Prostate gland (tissue), 2 donors: ENCODE measurements at regions of chr6 and their contacts with region 1.

Region 1: DNA sequence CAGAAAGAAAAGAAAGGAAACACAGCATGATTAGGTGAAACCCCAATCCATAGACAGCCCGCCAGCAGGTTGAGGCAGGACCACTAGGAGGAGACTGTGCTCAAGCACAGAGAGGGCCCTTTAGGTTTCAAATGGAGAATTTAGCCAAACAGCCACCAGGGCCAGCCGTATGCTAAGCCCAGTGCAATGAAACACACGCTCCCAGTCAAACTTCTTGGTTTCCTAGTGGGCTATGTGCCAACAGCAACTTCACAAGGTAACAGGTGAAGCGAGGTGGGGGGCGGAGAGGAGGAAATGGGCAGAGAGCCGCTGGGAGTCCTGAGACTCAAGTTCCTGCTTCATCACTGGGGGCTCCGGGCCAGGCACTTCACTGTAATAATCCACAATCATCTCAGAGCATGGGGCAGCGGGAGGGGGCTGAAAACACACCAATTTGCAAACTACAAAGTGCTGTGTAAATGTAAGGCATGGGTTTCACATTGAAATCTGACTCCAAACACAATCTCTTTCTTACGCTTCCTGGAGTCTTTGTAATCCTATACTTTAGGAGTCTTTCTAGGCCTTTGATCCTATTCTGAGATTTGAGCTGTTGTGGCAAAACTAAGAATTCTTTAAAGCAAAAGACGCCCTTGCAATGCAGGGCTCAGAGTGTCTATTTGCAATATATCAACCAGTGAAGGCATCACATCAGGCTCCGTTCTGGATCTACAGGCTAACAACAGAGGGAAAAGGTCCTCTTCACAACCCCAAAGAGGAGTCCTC is 117.3 kb downstream of the OPRM1 start:
- DNase-seq: peak; percentile 23
- H3K4me3 ChIP-seq: no peak overlapping the region
- H3K27ac ChIP-seq: no peak overlapping the region
- H3K4me1 ChIP-seq: no peaks in the 10 kb centered on the region
- H3K27me3 ChIP-seq: no peaks in the 10 kb centered on the region
- CTCF ChIP-seq: peak in 2 of 4 experiments; percentile 62 to 80
- POLR2A ChIP-seq: no peak

Region 2: GRCh38 chr6:154106251-154106650 is 50.1 kb before region 1 on chr6:
- intact Hi-C with region 1: no loop called
- DNase-seq: no peak
- H3K4me3 ChIP-seq: no peak overlapping the region
- H3K27ac ChIP-seq: no peak overlapping the region
- H3K4me1 ChIP-seq: no peaks in the 10 kb centered on the region
- H3K27me3 ChIP-seq: no peaks in the 10 kb centered on the region
- CTCF ChIP-seq: no peak
- POLR2A ChIP-seq: no peak

Region 3: GRCh38 chr6:154276810-154277628 is 120.7 kb after region 1 on chr6:
- intact Hi-C with region 1: loop called (anchors 2 kb)
- DNase-seq: no peak
- H3K4me3 ChIP-seq: no peak overlapping the region
- H3K27ac ChIP-seq: no peak overlapping the region
- H3K4me1 ChIP-seq: no peaks in the 10 kb centered on the region
- H3K27me3 ChIP-seq: no peaks in the 10 kb centered on the region
- CTCF ChIP-seq: peak; percentile 39 to 75 (median 60)
- POLR2A ChIP-seq: no peak

Region 4: DNA sequence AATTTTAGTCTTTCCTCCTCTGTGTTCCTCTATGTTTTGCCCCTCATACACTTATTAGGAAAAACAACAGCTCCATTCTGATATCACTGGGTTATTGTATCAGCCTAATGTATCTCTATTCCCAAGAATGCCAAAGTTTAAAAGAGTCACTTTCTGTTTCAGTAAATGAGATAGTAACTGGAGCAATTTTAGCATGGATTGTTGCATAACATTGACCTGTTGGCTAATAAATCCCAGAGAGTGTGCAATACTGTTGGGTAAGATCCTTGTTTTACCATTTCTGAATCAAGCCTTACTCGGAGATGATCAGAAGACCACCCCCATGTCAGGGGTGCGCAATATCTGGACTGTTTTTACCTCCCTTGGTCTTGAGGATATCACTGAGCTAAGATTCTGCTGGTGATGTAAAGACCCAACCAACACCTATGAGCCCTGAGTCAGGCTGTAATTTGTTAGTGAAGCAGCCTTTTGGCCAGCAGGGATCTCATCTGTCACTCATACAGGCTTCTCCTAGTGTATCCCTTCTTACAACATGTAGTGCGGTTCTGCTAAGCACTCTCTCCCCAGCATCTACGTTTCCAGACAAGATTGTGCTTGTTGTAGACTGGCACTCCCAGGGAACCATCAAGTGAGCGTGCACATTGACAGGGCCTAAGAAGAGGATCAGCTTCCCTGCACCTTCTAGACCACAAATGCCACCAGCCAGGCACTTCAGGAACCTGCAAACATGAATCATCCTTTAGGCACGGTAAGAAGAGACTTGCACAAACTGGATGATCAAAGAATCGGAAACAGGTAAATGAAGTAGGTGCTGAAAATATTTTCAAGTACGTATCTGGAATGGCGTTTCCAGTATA is 211.8 kb after region 1 on chr6:
- intact Hi-C with region 1: loop called (anchors 10 kb)
- DNase-seq: no peak
- H3K4me3 ChIP-seq: no peak overlapping the region
- H3K27ac ChIP-seq: no peak overlapping the region
- H3K4me1 ChIP-seq: no peaks in the 10 kb centered on the region
- H3K27me3 ChIP-seq: no peaks in the 10 kb centered on the region
- CTCF ChIP-seq: no peak
- POLR2A ChIP-seq: no peak

Region 5: DNA sequence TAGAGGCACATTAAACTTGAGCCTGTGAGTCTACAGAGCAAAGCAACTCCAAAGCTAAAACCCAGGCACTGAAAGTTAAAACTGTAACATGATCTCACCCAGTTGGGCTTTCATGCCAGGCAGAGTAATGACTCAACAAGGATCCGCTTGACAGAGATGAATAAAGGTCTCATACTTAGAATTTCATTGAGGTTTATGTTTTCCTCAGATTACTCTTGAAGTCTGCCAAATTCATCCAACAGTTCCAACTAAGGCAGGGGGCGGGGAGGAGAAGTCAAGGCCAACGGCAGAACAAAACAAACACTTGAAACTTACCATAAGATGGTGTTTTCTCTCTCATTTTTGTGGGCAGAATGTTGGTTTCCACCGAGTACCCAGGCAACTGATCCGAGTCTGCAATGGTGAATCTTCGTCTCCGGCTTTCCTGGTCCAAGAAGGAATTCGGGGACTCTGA is 254.3 kb after region 1 on chr6:
- intact Hi-C with region 1: loop called (anchors 2 kb)
- DNase-seq: peak; percentile 40
- H3K4me3 ChIP-seq: no peak overlapping the region
- H3K27ac ChIP-seq: peak overlapping the region; percentile 44 to 59
- H3K4me1 ChIP-seq: no peaks in the 10 kb centered on the region
- H3K27me3 ChIP-seq: no peaks in the 10 kb centered on the region
- CTCF ChIP-seq: no peak
- POLR2A ChIP-seq: no peak

Region 6: GRCh38 chr6:154509421-154510142 is 353.3 kb after region 1 on chr6:
- intact Hi-C with region 1: loop called (anchors 10 kb)
- DNase-seq: peak; percentile 25
- H3K4me3 ChIP-seq: peak overlapping the region; percentile 65 to 72
- H3K27ac ChIP-seq: peak overlapping the region; percentile 89 to 92
- H3K4me1 ChIP-seq: no peaks in the 10 kb centered on the region
- H3K27me3 ChIP-seq: no peaks in the 10 kb centered on the region
- CTCF ChIP-seq: no peak
- POLR2A ChIP-seq: no peak